Activated B cell treated with CpG ODN at 0.5 μM for 24 hours (primary cell): ENCODE measurements at regions of chr12 and their contacts with region 1.

Region 1: DNA sequence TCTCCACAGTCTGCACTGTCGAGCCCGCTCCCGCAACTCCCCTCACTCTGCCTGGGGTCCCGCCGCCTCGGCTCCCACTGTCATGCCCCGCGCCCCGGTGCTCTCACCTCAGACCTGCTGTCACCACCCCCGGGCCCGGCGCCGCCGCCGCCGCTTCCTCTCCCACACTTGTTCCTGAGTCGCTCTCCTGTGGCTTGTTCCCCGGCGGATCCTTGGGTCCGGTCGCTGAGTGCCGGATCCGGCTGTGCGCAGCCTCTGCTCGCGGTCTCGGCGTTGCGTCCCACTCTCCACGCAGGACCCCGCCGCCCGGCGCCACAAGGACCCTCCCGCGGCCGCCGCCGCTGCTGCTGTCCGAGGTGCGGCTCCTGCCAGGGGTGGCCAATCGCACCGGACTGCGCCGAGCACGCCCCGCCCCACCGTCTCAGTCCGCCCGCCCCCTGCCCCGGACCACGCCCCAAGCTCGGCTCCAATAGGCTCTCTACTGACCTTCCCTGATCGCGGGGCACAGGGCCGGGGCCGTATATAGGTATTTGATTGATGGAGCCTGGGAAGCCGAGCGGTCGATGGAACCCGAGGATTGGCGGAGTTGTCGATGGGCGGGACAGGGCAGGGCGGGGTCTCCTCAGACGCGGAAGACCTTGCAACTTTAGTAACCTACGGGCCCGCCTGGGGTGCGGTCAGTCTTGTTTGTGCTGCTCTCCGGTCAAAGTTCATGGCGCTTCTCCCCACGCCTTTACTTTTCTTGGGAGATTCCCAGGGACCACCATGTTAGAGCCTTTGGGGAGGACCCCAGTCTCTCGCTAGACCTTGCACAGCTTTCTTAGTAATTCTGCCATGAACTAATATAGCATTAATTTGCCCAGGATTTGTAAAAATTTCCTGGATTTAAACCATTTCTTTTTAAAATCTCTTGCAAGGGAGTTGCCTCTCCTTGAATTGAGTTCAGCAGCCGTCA is at the start of gene TAOK3:
- DNase-seq: peak; percentile 90
- ATAC-seq: peak; percentile 87
- H3K4me3 Mint-ChIP-seq: peak within 1 kb of the TSS; percentile 94
- H3K27ac Mint-ChIP-seq: peak within 1 kb of the TSS; percentile 95
- H3K4me1 Mint-ChIP-seq: peaks cover 43% of the 10 kb centered on the region
- H3K27me3 Mint-ChIP-seq: no peaks in the 10 kb centered on the region
- CTCF ChIP-seq: no peak
- total RNA-seq, gene TAOK3: 76.3 and 86.9 TPM in 2 replicates

Region 2: GRCh38 chr12:117874842-117875434 is 497.9 kb before region 1 on chr12:
- CTCF ChIA-PET with region 1: interaction called, 3 read pairs
- POLR2A ChIA-PET with region 1: no interaction called
- intact Hi-C with region 1: loop called (anchors 2 kb)
- DNase-seq: peak; percentile 44
- ATAC-seq: peak; percentile 73
- H3K4me3 Mint-ChIP-seq: no peak overlapping the region
- H3K27ac Mint-ChIP-seq: no peak overlapping the region
- H3K4me1 Mint-ChIP-seq: peaks cover 8% of the 10 kb centered on the region
- H3K27me3 Mint-ChIP-seq: peaks cover 13% of the 10 kb centered on the region
- CTCF ChIP-seq: peak; percentile 39

Region 3: GRCh38 chr12:118120579-118121363 is 252.0 kb before region 1 on chr12:
- CTCF ChIA-PET with region 1: interaction called, 31 read pairs
- POLR2A ChIA-PET with region 1: interaction called, 12 read pairs
- intact Hi-C with region 1: loop called (anchors 1 kb)
- DNase-seq: peak; percentile 37
- ATAC-seq: peak; percentile 61
- H3K4me3 Mint-ChIP-seq: no peak overlapping the region
- H3K27ac Mint-ChIP-seq: peak overlapping the region; percentile 46
- H3K4me1 Mint-ChIP-seq: peaks cover 2% of the 10 kb centered on the region
- H3K27me3 Mint-ChIP-seq: no peaks in the 10 kb centered on the region
- CTCF ChIP-seq: peak; percentile 77

Region 4: DNA sequence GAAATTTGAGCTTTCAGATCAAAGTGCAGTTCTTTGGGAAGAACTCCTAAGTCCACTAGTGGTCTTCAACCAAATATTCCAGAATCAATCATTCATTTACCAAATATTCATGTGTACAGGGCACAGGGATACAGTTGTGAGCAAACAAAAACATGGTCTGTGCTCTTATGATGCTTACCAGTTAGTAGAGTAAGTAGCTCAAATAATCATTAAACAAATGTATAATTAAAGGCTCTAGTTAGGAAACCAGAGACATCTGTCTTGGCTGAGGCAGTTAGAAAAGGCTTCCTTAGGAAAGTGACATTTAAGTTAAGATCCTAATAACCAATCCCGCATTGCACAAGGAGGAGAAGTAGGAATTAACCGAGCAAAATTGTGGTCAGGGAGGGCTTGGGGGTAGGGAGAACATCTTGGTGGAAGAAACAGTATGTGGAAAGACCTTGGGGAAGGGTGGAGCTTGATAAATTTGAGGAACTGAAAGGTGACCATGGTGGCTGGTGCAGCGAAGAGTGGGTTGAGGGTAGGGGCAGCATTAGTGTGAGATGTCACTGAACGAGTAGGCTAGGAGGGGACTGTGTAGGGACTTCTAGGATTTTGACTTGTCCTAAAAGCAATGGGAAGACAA is 196.9 kb before region 1 on chr12:
- CTCF ChIA-PET with region 1: interaction called, 124 read pairs
- POLR2A ChIA-PET with region 1: interaction called, 6 read pairs
- intact Hi-C with region 1: no loop called
- DNase-seq: no peak
- ATAC-seq: peak; percentile 95
- H3K4me3 Mint-ChIP-seq: peak overlapping the region; percentile 5
- H3K27ac Mint-ChIP-seq: peak overlapping the region; percentile 51
- H3K4me1 Mint-ChIP-seq: peaks cover 13% of the 10 kb centered on the region
- H3K27me3 Mint-ChIP-seq: no peaks in the 10 kb centered on the region
- CTCF ChIP-seq: no peak

Region 5: DNA sequence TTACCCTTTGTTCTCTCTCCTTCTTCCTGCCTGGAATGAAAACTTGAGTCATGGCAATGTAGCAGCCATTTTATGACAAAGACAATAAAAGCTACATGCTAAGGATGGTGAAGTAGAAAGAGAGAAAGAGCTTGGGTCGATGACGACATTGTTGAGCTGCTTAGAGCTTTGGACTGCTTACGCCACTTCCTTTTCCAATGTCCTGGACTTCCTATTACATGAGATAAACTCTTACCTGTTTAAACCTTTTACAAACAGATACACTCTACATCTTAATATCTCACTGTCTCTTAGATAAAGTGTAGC is 166.8 kb before region 1 on chr12:
- CTCF ChIA-PET with region 1: interaction called, 10 read pairs
- POLR2A ChIA-PET with region 1: interaction called, 6 read pairs
- intact Hi-C with region 1: no loop called
- DNase-seq: no peak
- ATAC-seq: no peak
- H3K4me3 Mint-ChIP-seq: no peak overlapping the region
- H3K27ac Mint-ChIP-seq: no peak overlapping the region
- H3K4me1 Mint-ChIP-seq: peaks cover 3% of the 10 kb centered on the region
- H3K27me3 Mint-ChIP-seq: no peaks in the 10 kb centered on the region
- CTCF ChIP-seq: no peak

Region 6: GRCh38 chr12:118330421-118331018 is 42.3 kb before region 1 on chr12:
- CTCF ChIA-PET with region 1: interaction called, 7 read pairs
- POLR2A ChIA-PET with region 1: interaction called, 11 read pairs
- intact Hi-C with region 1: loop called (anchors 2 kb)
- DNase-seq: no peak
- ATAC-seq: peak; percentile 86
- H3K4me3 Mint-ChIP-seq: peak overlapping the region; percentile 60
- H3K27ac Mint-ChIP-seq: peak overlapping the region; percentile 93
- H3K4me1 Mint-ChIP-seq: peaks cover 61% of the 10 kb centered on the region
- H3K27me3 Mint-ChIP-seq: no peaks in the 10 kb centered on the region
- CTCF ChIP-seq: no peak